ENCODE measurements at regions of chr22 and their contacts with region 1.

Region 1: DNA sequence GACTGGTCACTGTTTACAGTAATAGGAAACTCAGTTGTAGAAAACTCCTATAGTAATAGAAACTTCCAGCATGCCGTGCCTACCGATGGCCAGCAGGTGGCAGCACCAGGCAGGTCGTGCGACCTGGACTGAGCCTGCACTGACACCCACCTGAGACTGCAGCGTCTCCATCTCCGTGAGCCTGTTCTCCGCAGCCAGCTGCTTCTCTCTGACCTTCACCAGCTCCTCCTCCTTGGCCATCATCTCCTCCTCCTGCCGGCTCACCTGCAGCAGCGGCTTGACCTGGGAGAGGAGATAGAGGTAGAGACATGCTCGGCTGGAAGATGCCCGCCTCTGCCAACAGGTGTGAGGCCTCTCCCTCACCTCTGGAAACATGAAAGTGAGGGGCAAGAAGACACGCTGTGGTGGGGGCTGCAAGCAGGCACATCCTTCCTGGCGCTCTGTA is 48.5 kb downstream of the APOL1 start:
- DNase-seq: peak; percentile 73 to 87 (median 78)
- H3K4me3 ChIP-seq: no peak overlapping the region
- H3K4me3 Mint-ChIP-seq: peak overlapping the region in 2 of 7 donors; percentile 43 to 85
- H3K27ac ChIP-seq: no peak overlapping the region
- H3K27ac Mint-ChIP-seq: peak overlapping the region; percentile 37 to 91 (median 79)
- H3K4me1 ChIP-seq: peaks cover 10% of the 10 kb centered on the region
- H3K4me1 Mint-ChIP-seq: peaks cover 11 to 16% (median 13%) of the 10 kb centered on the region in 3 donors
- H3K27me3 ChIP-seq: no peaks in the 10 kb centered on the region
- H3K27me3 Mint-ChIP-seq: peaks cover 0 to 3% of the 10 kb centered on the region in 2 donors

Region 2: GRCh38 chr22:36252754-36253517 is 48.5 kb before region 1 on chr22 and contains the start of gene APOL1:
- CTCF ChIA-PET with region 1: no interaction called
- POLR2A ChIA-PET with region 1: no interaction called
- DNase-seq: peak in 4 of 5 donors; percentile 39 to 70 (median 62)
- H3K4me3 ChIP-seq: peak within 1 kb of the TSS; percentile 74
- H3K4me3 Mint-ChIP-seq: peak within 1 kb of the TSS; percentile 88 to 99 (median 96)
- H3K27ac ChIP-seq: peak within 1 kb of the TSS; percentile 58
- H3K27ac Mint-ChIP-seq: peak within 1 kb of the TSS; percentile 76 to 99 (median 97)
- H3K4me1 ChIP-seq: peaks cover 38% of the 10 kb centered on the region
- H3K4me1 Mint-ChIP-seq: peaks cover 44 to 53% (median 46%) of the 10 kb centered on the region in 3 donors
- H3K27me3 ChIP-seq: no peaks in the 10 kb centered on the region
- H3K27me3 Mint-ChIP-seq: no peaks in the 10 kb centered on the region
- total RNA-seq, gene APOL1: 32.8 to 34.3 TPM

Region 3: GRCh38 chr22:36277482-36278291 is 23.7 kb before region 1 on chr22:
- CTCF ChIA-PET with region 1: interaction called, 24 read pairs
- POLR2A ChIA-PET with region 1: interaction called, 3 read pairs
- DNase-seq: peak; percentile 45 to 76 (median 56)
- H3K4me3 ChIP-seq: no peak overlapping the region
- H3K4me3 Mint-ChIP-seq: peak overlapping the region in 1 of 7 donors; percentile 20
- H3K27ac ChIP-seq: no peak overlapping the region
- H3K27ac Mint-ChIP-seq: peak overlapping the region; percentile 28 to 91 (median 58)
- H3K4me1 ChIP-seq: peaks cover 14% of the 10 kb centered on the region
- H3K4me1 Mint-ChIP-seq: peaks cover 13 to 22% (median 18%) of the 10 kb centered on the region in 3 donors
- H3K27me3 ChIP-seq: no peaks in the 10 kb centered on the region
- H3K27me3 Mint-ChIP-seq: peaks cover 0 to 2% of the 10 kb centered on the region in 2 donors

Region 4: GRCh38 chr22:36311386-36312358 is 10.3 kb after region 1 on chr22:
- CTCF ChIA-PET with region 1: interaction called, 34 read pairs
- POLR2A ChIA-PET with region 1: interaction called, 5 read pairs
- DNase-seq: no peak
- H3K4me3 ChIP-seq: no peak overlapping the region
- H3K4me3 Mint-ChIP-seq: no peak overlapping the region
- H3K27ac ChIP-seq: no peak overlapping the region
- H3K27ac Mint-ChIP-seq: peak overlapping the region in 3 of 8 donors; percentile 38 to 73 (median 70)
- H3K4me1 ChIP-seq: no peaks in the 10 kb centered on the region
- H3K4me1 Mint-ChIP-seq: peaks cover 3 to 7% (median 5%) of the 10 kb centered on the region in 3 donors
- H3K27me3 ChIP-seq: no peaks in the 10 kb centered on the region
- H3K27me3 Mint-ChIP-seq: peaks cover 0 to 2% of the 10 kb centered on the region in 2 donors

Region 5: DNA sequence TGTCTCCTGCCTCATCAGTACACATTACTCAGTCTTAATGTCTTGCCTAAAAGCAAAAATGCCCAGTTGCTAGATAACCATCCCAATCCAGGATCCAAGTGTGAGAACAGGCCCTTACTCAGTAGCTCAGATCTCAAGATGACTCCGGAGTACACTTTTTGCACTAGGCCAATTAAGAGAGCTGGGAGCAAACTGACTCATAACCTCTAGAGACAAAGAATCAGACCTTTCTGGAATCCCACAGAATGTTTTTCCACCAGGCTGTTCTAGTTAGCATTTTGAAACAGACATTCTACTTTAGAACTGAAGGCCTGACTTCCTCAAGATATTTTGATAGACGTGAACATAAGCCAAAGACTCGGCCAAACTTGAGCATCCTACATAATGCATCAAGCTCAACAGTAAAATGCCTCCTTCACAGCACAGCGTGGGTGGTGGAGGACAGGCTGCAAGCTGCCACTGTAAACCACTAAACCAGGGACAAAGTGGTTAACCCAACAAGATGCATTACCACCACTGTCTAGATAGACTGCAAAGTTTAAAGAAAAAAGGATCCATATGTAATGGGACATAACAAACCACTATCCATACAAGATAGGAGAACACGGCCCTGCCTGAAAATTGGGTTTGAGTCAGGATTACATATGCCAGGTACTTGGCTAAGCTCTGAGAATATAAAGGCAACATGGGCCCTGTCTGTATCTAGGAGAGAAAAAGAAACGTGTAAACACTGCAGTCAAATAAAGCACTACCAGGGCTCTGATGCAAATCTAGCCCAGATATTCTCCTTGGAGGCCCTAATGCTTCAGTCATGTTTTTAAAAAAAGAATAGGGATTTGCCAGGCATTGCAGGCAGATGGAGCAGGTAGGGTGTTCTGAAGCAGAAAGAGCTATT is 38.0 kb after region 1 on chr22:
- CTCF ChIA-PET with region 1: interaction called, 14 read pairs
- POLR2A ChIA-PET with region 1: no interaction called
- DNase-seq: peak in 1 of 5 donors; percentile 47
- H3K4me3 ChIP-seq: no peak overlapping the region
- H3K4me3 Mint-ChIP-seq: peak overlapping the region; percentile 40 to 67 (median 65)
- H3K27ac ChIP-seq: no peak overlapping the region
- H3K27ac Mint-ChIP-seq: peak overlapping the region; percentile 90 to 99 (median 93)
- H3K4me1 ChIP-seq: peaks cover 98% of the 10 kb centered on the region
- H3K4me1 Mint-ChIP-seq: peaks cover 83 to 97% (median 95%) of the 10 kb centered on the region in 3 donors
- H3K27me3 ChIP-seq: no peaks in the 10 kb centered on the region
- H3K27me3 Mint-ChIP-seq: peaks cover 0 to 2% of the 10 kb centered on the region in 2 donors

Region 6: GRCh38 chr22:36379593-36380361 is 78.4 kb after region 1 on chr22:
- CTCF ChIA-PET with region 1: interaction called, 14 read pairs
- POLR2A ChIA-PET with region 1: interaction called, 5 read pairs
- DNase-seq: peak; percentile 42 to 81 (median 64)
- H3K4me3 ChIP-seq: peak overlapping the region; percentile 52
- H3K4me3 Mint-ChIP-seq: peak overlapping the region; percentile 61 to 88 (median 84)
- H3K27ac ChIP-seq: peak overlapping the region; percentile 48
- H3K27ac Mint-ChIP-seq: peak overlapping the region; percentile 89 to 99 (median 98)
- H3K4me1 ChIP-seq: peaks cover 96% of the 10 kb centered on the region
- H3K4me1 Mint-ChIP-seq: peaks cover 84 to 94% (median 91%) of the 10 kb centered on the region in 3 donors
- H3K27me3 ChIP-seq: no peaks in the 10 kb centered on the region
- H3K27me3 Mint-ChIP-seq: no peaks in the 10 kb centered on the region

Region 7: GRCh38 chr22:36481393-36482168 is 180.2 kb after region 1 on chr22 and contains the start of gene TXN2:
- CTCF ChIA-PET with region 1: interaction called, 56 read pairs
- POLR2A ChIA-PET with region 1: no interaction called
- DNase-seq: peak; percentile 93 to 99 (median 96)
- H3K4me3 ChIP-seq: peak within 1 kb of the TSS; percentile 75
- H3K4me3 Mint-ChIP-seq: peak within 1 kb of the TSS; percentile 90 to 100 (median 98)
- H3K27ac ChIP-seq: peak within 1 kb of the TSS; percentile 77
- H3K27ac Mint-ChIP-seq: peak within 1 kb of the TSS; percentile 98 to 99 (median 99)
- H3K4me1 ChIP-seq: peaks cover 16% of the 10 kb centered on the region
- H3K4me1 Mint-ChIP-seq: peaks cover 16 to 29% (median 23%) of the 10 kb centered on the region in 3 donors
- H3K27me3 ChIP-seq: no peaks in the 10 kb centered on the region
- H3K27me3 Mint-ChIP-seq: peaks cover 0 to 4% of the 10 kb centered on the region in 2 donors
- total RNA-seq, gene TXN2: 122 to 126 TPM